ENCODE measurements at regions of chr15 and their contacts with region 1.

Region 1: GRCh38 chr15:50675536-50676144 is 11.0 kb downstream of the TRPM7 start:
- DNase-seq: peak; percentile 17
- H3K4me3 ChIP-seq: no peak overlapping the region; a peak in 1 of 4 replicates
- H3K27ac ChIP-seq: no peak overlapping the region
- H3K4me1 ChIP-seq: no peaks in the 10 kb centered on the region
- H3K27me3 ChIP-seq: no peaks in the 10 kb centered on the region
- CTCF ChIP-seq: peak; percentile 93
- EP300 ChIP-seq: no peak
- RAD21 ChIP-seq: peak; percentile 73

Region 2: DNA sequence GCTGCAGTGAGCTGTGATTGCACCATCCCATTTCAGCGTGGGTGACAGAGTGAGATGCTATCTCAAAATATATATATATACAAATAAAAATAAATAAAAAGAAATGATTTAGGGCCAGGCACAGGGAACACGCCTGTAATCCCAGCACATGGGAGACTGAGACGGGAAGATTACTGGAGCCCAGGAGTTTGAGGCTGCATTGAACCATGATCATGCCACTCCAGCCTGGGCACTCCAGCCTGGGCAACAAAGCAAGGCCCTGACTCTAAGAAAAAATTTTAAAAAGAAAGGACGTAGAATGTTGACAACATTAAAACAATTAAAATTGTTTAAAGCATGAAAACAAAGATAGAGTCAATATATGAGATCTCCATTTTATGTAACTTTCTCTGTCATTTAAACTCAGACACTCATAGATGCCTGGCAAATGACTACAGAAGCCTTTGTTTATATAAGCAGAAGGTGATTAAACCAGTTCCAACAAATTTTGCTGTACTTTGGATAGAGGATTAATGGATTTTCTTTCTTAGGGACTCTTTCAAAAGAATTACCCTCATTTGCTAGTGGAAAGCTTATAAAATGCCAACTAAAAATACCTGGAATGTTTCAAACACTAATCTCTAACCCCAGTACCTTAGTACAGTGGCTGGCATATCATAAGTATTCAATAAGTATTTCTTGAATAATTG is 21.6 kb after region 1 on chr15:
- CTCF ChIA-PET with region 1: no interaction called
- POLR2A ChIA-PET with region 1: no interaction called
- DNase-seq: no peak
- H3K4me3 ChIP-seq: no peak overlapping the region
- H3K27ac ChIP-seq: no peak overlapping the region
- H3K4me1 ChIP-seq: no peaks in the 10 kb centered on the region
- H3K27me3 ChIP-seq: no peaks in the 10 kb centered on the region
- CTCF ChIP-seq: no peak
- EP300 ChIP-seq: no peak
- RAD21 ChIP-seq: no peak

Region 3: DNA sequence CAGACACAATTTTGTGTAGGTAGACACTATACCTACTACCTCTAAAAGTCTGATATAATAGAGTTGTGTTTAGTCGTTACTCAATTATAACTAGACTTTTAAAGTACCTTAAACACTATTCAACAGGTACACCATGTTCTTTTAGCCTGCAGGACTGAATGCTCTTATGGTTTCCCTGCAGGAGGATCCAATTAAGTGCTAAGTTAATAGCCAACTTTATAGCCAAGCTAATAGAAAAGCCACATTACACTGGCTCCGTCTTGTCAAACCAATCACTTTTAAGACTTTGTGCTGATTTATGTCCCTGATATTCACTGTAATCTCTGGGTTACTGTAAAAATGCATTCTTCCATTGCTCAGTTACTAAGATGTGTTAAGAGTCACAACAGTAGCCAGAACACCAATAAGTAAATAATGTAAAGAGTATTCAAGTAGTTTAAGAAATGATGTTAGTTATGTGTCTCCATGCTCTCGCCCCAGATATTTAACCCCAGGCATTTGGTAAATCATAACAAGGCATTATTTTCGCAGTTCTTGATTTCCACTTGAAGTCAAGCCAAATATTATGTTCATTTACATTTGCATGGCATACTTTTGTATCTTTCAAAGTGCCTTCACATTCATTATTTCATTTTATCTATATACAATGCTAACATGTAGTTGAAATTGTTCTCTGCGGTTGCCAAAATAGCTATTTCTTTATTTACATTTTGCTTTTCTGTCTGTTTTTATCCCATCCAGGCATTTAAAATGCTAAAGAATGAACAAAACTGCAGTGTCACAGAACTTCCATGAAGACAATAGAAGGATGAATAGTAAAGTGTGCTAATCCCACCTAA is 190.1 kb after region 1 on chr15:
- CTCF ChIA-PET with region 1: interaction called, 12 read pairs
- POLR2A ChIA-PET with region 1: no interaction called
- DNase-seq: no peak
- H3K4me3 ChIP-seq: no peak overlapping the region
- H3K27ac ChIP-seq: no peak overlapping the region
- H3K4me1 ChIP-seq: no peaks in the 10 kb centered on the region
- H3K27me3 ChIP-seq: no peaks in the 10 kb centered on the region
- CTCF ChIP-seq: no peak
- EP300 ChIP-seq: no peak
- RAD21 ChIP-seq: no peak

Measured in SK-N-SH (cell line).